ENCODE measurements at regions of chr15 and their contacts with region 1.

Region 1: GRCh38 chr15:64369078-64369607 is 12.1 kb downstream of the PCLAF start:
- DNase-seq: no peak
- H3K4me3 ChIP-seq: no peak overlapping the region
- H3K27ac ChIP-seq: no peak overlapping the region
- H3K4me1 ChIP-seq: no peaks in the 10 kb centered on the region
- H3K27me3 ChIP-seq: no peaks in the 10 kb centered on the region
- CTCF ChIP-seq: no peak

Region 2: DNA sequence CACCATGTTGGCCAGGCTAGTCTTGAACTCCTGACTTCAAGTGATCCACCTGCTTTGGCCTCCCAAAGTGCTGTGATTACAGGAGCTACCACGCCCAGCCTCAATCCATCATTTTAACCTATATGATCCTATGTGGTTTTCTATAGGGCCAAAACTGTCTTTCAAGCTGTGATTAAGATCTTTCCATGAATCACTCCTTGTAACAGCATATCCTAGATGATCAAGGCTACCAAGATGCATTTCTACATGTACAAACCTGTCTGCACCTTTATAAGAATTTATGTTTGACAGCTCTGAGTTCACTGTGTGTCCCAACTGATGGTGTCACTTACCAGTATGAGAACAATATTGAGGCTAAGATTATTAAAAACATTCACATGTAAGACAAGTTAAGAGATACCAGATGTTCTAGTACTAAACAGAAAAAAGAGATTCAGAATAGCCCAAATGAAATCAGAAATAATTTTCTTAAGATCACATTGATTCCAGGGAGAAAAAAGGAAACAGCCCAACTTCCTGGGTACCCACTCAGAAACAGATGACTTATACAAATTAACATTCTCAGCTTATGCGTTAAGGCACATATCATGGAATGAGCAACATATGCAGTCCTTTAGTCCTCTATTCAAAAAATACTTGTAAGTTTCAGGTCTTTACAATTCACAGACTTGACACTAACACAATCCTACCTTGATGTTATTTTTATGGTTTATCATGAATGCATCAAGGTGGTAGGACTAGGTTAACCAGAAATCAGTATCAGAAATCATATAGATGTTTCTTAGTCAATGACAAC is 181.5 kb before region 1 on chr15:
- CTCF ChIA-PET with region 1: no interaction called
- dilution Hi-C with region 1: loop called (anchors 5 kb)
- in situ Hi-C with region 1: no loop called
- intact Hi-C with region 1: no loop called
- DNase-seq: peak; percentile 87
- H3K4me3 ChIP-seq: no peak overlapping the region
- H3K27ac ChIP-seq: no peak overlapping the region
- H3K4me1 ChIP-seq: peaks cover 15% of the 10 kb centered on the region
- H3K27me3 ChIP-seq: no peaks in the 10 kb centered on the region
- CTCF ChIP-seq: no peak